AG04450 (cell line): ENCODE measurements at regions of chr17 and their contacts with region 1.

Region 1: DNA sequence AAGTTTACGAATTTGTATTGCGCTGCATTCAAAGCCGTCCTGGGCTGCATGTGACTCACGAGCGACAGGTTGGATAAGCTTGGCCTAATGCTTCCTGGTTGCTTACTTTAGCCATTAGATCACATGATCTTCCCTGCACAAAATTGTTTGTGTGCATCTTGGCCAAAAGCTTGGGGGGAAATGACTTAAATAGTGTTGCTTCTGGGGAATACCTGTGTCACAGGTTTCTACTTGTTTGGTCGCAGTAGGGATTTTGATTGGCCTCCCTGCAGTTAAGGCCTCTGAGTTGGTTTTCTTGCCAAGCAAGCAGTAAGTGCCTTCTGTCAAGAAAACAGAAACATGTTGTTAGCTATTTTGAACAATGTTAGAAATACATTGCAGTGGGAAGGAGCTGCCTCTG is 39.6 kb upstream of the DUSP14 start:
- DNase-seq: no peak
- H3K4me3 ChIP-seq: no peak overlapping the region
- H3K27ac ChIP-seq: no peak overlapping the region
- H3K27me3 ChIP-seq: no peaks in the 10 kb centered on the region
- CTCF ChIP-seq: no peak

Region 2: GRCh38 chr17:37438141-37438540 is 12.0 kb before region 1 on chr17:
- CTCF ChIA-PET with region 1: interaction called, 12 read pairs
- POLR2A ChIA-PET with region 1: no interaction called
- DNase-seq: no peak
- H3K4me3 ChIP-seq: no peak overlapping the region
- H3K27ac ChIP-seq: no peak overlapping the region
- H3K27me3 ChIP-seq: no peaks in the 10 kb centered on the region
- CTCF ChIP-seq: no peak

Region 3: GRCh38 chr17:37483311-37484039 is 33.4 kb after region 1 on chr17:
- CTCF ChIA-PET with region 1: interaction called, 13 read pairs
- POLR2A ChIA-PET with region 1: no interaction called
- DNase-seq: peak; percentile 92
- H3K4me3 ChIP-seq: no peak overlapping the region
- H3K27ac ChIP-seq: peak overlapping the region; percentile 95
- H3K27me3 ChIP-seq: no peaks in the 10 kb centered on the region
- CTCF ChIP-seq: no peak

Region 4: GRCh38 chr17:37493249-37494027 is 43.3 kb after region 1 on chr17:
- CTCF ChIA-PET with region 1: no interaction called
- POLR2A ChIA-PET with region 1: interaction called, 10 read pairs
- DNase-seq: peak; percentile 81
- H3K4me3 ChIP-seq: peak overlapping the region; percentile 22; the same call in 1 of the 2 replicates
- H3K27ac ChIP-seq: peak overlapping the region; percentile 82
- H3K27me3 ChIP-seq: no peaks in the 10 kb centered on the region
- CTCF ChIP-seq: no peak

Region 5: GRCh38 chr17:37725601-37726146 is 275.6 kb after region 1 on chr17:
- CTCF ChIA-PET with region 1: no interaction called
- POLR2A ChIA-PET with region 1: no interaction called
- DNase-seq: no peak
- H3K4me3 ChIP-seq: no peak overlapping the region
- H3K27ac ChIP-seq: no peak overlapping the region
- H3K27me3 ChIP-seq: peaks cover 17% of the 10 kb centered on the region
- CTCF ChIP-seq: no peak